ENCODE measurements at regions of chr5 and their contacts with region 1.

Region 1: GRCh38 chr5:68215208-68215897 is at the start of gene PIK3R1:
- DNase-seq: peak; percentile 96 to 98 (median 97)
- ATAC-seq: peak; percentile 84 to 97 (median 94)
- H3K4me3 ChIP-seq: peak within 1 kb of the TSS; percentile 77 to 97 (median 95)
- H3K27ac ChIP-seq: peak within 1 kb of the TSS; percentile 89 to 100 (median 98)
- H3K4me1 ChIP-seq: peaks cover 0 to 43% (median 24%) of the 10 kb centered on the region in 12 donors
- H3K27me3 ChIP-seq: no peaks in the 10 kb centered on the region
- CTCF ChIP-seq: peak in 10 of 12 donors; percentile 20 to 60 (median 40)
- POLR2A ChIP-seq: peak; percentile 72 to 98
- total RNA-seq, gene PIK3R1: 80.3 to 221 (median 147) TPM

Region 2: DNA sequence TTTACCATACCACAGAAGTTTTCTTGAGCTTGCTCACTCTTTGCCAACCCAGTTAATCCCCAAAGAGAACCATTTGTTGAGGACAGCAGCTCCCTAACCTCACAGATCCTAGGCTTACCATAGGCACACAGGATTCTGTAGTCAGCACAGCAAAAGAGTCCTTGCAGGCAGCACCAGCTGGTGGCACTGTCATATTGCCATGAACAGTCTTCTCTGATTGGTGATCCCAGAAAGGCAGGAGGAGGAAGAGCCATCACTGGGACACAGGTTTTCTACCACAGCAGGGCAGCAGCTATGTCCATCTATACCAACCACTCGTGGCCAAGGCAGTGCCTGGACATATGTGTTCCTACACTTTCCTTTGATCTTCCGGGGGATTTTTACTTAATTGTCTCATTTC is 721.7 kb before region 1 on chr5:
- intact Hi-C with region 1: loop called in 2 of 10 experiments (anchors 2 to 10 kb)
- DNase-seq: peak; percentile 32 to 60 (median 43)
- ATAC-seq: peak; percentile 91 to 96 (median 94)
- H3K4me3 ChIP-seq: no peak overlapping the region
- H3K27ac ChIP-seq: peak overlapping the region in 1 of 12 donors; percentile 63
- H3K4me1 ChIP-seq: peaks cover 0 to 9% (median 0%) of the 10 kb centered on the region in 12 donors
- H3K27me3 ChIP-seq: no peaks in the 10 kb centered on the region
- CTCF ChIP-seq: peak; percentile 20 to 62 (median 46)
- POLR2A ChIP-seq: no peak

Region 3: DNA sequence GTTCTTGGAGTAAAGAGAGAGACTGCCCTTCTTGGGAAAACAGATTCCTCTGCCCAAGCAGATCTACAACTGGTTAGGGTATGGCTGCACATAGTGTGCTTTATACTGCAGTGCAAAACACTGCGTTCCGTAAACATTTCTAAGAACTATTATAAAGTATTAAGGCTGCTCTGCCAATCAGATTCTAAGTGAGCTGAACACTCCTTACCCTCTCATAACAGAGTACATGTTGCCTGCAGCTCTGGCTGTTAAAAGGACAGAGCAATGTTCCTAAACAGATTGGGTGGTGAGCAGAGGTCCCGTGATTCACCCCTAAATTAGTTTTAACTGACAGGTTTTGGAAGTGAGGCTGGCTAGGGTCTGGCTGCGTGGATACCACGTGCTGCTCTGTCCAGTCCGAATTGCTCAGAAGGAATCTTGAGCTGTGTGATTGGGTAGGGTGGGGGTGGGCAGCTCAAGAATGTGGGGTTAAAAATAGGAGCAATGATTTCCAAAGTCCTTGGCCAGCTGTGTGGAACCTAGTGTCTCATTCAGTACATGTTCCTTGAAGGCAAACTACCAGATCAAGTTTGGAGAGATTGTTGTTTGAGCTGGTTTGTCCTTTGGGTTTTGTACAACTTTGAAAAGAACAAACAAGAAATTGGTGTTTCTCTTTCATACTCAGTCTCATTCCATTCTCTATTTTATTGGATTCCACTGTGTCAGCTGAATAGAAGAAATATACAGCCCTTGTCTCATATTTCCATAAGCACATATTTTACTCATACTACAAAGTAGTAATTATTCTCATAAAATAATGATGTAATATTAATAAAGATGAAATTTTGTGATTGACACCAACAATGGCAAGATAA is 521.2 kb before region 1 on chr5:
- intact Hi-C with region 1: loop called in 1 of 10 experiments (anchors 2 kb)
- DNase-seq: peak; percentile 49 to 84 (median 65)
- ATAC-seq: peak; percentile 96 to 98 (median 98)
- H3K4me3 ChIP-seq: no peak overlapping the region
- H3K27ac ChIP-seq: peak overlapping the region; percentile 38 to 93 (median 78)
- H3K4me1 ChIP-seq: peaks cover 0 to 20% (median 9%) of the 10 kb centered on the region in 12 donors
- H3K27me3 ChIP-seq: no peaks in the 10 kb centered on the region
- CTCF ChIP-seq: no peak
- POLR2A ChIP-seq: no peak

Region 4: DNA sequence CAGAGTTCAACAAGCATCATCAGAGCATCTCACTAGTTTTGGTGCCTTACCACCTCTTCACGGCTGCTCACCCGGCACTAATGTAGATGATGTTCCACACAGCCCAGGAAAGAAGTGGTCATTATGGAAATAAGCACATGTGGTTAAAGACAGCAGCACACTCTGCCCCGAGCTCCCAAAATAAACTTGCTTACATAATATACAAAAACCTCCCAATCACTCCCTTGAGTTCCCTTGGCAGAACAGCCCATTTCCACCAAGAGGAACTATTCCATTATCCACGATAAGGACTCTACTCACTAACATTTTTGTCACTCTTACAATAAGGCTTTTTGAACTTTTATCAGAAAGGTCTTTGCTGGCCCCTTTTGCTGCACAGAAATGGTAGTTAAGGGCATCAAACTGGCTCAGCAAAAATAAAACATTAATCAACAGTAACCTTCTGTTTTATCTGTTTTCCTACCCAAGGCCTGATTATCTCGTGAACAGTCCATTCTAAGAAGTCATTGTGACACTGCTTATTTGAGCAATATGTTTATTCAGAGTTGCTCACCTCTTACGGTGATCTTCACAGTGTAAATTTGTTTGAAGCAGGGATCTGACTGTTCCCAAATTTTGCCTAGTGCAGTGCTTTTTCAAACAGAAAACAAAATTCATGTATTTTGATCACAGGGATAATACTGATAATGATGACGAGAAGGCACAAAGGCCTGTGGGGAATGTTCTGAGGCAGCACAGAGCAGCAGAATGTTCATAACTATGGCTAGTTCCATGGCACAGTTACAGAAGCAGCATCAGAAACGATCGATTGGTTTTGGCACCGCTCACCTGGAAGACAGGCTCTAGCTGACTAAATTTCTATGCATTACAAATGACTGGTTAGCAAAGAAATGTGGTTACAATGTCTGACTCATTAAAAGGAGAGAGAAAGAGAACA is 399.6 kb before region 1 on chr5:
- intact Hi-C with region 1: loop called in 2 of 10 experiments (anchors 10 kb)
- DNase-seq: peak in 4 of 5 donors; percentile 31 to 43 (median 38)
- ATAC-seq: peak; percentile 93 to 96 (median 96)
- H3K4me3 ChIP-seq: no peak overlapping the region
- H3K27ac ChIP-seq: peak overlapping the region; percentile 4 to 88 (median 72)
- H3K4me1 ChIP-seq: peaks cover 0 to 32% (median 26%) of the 10 kb centered on the region in 12 donors
- H3K27me3 ChIP-seq: no peaks in the 10 kb centered on the region
- CTCF ChIP-seq: no peak
- POLR2A ChIP-seq: no peak

Region 5: GRCh38 chr5:67844924-67845323 is 370.4 kb before region 1 on chr5:
- intact Hi-C with region 1: no loop called
- DNase-seq: no peak
- ATAC-seq: no peak
- H3K4me3 ChIP-seq: no peak overlapping the region
- H3K27ac ChIP-seq: no peak overlapping the region
- H3K4me1 ChIP-seq: no peaks in the 10 kb centered on the region
- H3K27me3 ChIP-seq: no peaks in the 10 kb centered on the region
- CTCF ChIP-seq: no peak
- POLR2A ChIP-seq: no peak

Region 6: DNA sequence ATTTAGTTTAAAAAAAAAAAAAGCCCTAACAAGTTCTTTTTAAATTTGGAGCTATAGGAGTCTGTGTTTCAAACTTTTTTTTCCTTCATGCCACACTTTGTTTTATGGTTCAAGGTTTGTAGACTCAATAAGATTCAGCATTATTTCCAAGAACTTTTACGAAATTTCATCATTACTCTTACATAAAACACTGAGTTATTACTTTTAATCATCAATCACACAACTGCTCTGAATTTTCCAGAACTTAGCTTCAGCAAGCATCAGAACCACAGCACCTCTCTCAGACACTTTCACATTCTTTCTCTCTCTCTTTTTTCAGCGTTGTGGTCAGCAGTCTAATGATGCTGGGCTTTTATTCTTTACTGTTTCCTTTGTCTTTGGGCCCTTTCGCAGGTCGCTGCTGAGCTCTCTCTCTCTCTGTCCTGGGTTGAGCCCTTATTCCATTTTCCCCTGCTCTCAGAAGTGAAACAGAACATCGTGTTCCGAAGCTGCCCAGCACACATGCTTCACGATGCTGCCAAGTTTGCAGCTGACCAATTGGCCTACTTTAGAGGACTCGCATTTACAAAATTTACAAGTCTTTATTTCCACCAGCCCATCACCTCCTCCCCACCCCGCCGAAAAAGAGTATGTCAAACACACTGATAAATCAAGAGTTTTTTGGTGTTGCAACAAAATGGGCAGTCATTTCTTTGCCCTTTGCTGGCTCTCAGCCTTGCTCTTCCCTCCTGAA is 44.4 kb before region 1 on chr5:
- intact Hi-C with region 1: loop called in 1 of 10 experiments (anchors 5 kb)
- DNase-seq: peak in 4 of 5 donors; percentile 31 to 79 (median 60)
- ATAC-seq: peak; percentile 92 to 98 (median 96)
- H3K4me3 ChIP-seq: peak overlapping the region in 4 of 12 donors; percentile 6 to 17 (median 16)
- H3K27ac ChIP-seq: peak overlapping the region; percentile 41 to 85 (median 68)
- H3K4me1 ChIP-seq: peaks cover 0 to 35% (median 8%) of the 10 kb centered on the region in 12 donors
- H3K27me3 ChIP-seq: no peaks in the 10 kb centered on the region
- CTCF ChIP-seq: no peak
- POLR2A ChIP-seq: no peak

Region 7: GRCh38 chr5:68272289-68272688 is 56.9 kb after region 1 on chr5:
- intact Hi-C with region 1: loop called in 1 of 10 experiments (anchors 5 kb)
- DNase-seq: no peak
- ATAC-seq: no peak
- H3K4me3 ChIP-seq: no peak overlapping the region
- H3K27ac ChIP-seq: peak overlapping the region in 9 of 12 donors; percentile 56 to 86 (median 65)
- H3K4me1 ChIP-seq: peaks cover 0 to 90% (median 69%) of the 10 kb centered on the region in 12 donors
- H3K27me3 ChIP-seq: no peaks in the 10 kb centered on the region
- CTCF ChIP-seq: peak in 11 of 12 donors; percentile 27 to 58 (median 42)
- POLR2A ChIP-seq: no peak

Measured in heart left ventricle (tissue), 16 donors.